ENCODE measurements at regions of chr15 and their contacts with region 1.

Region 1: GRCh38 chr15:91515188-91515754 is 338.2 kb upstream of the SLCO3A1 start:
- DNase-seq: no peak
- ATAC-seq: peak; percentile 53
- H3K4me3 ChIP-seq: no peak overlapping the region
- H3K27ac ChIP-seq: no peak overlapping the region
- H3K4me1 ChIP-seq: no peaks in the 10 kb centered on the region
- H3K27me3 ChIP-seq: no peaks in the 10 kb centered on the region; a peak in 2 of 4 replicates
- CTCF ChIP-seq: no peak
- EP300 ChIP-seq: no peak
- POLR2A ChIP-seq: no peak
- RAD21 ChIP-seq: no peak

Region 2: DNA sequence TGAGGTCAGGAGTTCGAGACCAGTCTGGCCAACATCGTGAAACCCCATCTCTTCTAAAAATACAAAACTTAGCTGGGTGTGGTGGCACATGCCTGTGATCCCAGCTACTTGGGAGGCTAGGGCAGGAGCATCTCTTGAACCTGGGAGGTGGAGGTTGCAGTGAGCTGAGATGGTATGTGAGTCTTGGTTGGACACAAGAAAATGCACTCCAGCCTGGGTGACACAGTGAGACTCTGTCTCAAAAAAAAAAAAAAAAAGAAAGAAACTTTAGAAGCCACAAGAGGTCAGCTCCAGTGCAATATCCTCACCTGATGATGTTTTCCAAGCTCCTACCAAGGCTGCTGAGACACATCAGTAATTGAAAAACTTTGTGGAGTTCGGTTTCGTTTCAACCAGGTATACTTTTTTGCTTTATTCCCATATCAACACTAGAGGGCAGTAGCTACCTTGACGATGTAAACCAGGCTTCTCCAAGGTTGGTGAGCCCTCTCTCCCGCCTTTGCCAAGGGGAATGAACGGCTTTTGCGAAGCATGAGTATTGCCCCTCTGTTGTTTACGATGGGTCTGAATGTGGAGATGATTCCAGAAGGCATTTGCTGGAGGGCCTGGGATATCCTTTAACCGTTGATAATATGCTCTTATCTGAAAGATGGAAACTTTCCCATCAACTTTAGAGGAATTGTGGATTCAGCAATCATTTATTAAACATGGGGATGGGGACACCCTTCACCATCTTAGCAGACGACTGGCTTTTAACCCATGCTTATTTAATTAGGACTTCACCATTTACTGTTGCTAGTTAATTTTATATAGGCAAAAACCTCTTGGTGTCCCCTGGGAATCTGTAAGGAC is 212.5 kb before region 1 on chr15:
- CTCF ChIA-PET with region 1: no interaction called
- POLR2A ChIA-PET with region 1: interaction called, 3 read pairs
- RAD21 ChIA-PET with region 1: no interaction called
- SMC1A ChIA-PET with region 1: no interaction called
- in situ Hi-C with region 1: no loop called
- intact Hi-C with region 1: loop called (anchors 10 kb)
- DNase-seq: peak; percentile 17
- ATAC-seq: peak; percentile 78
- H3K4me3 ChIP-seq: no peak overlapping the region
- H3K27ac ChIP-seq: no peak overlapping the region
- H3K4me1 ChIP-seq: no peaks in the 10 kb centered on the region
- H3K27me3 ChIP-seq: peaks cover 0 to 3% of the 10 kb centered on the region in 2 experiments; a peak in 1 of 4 replicates
- CTCF ChIP-seq: peak; percentile 67 to 78 (median 70)
- EP300 ChIP-seq: no peak
- POLR2A ChIP-seq: no peak
- RAD21 ChIP-seq: peak; percentile 86

Measured in GM12878 (cell line).